ENCODE measurements at regions of chr9 and their contacts with region 1.

Region 1: GRCh38 chr9:134742822-134743535 is 101.4 kb downstream of the COL5A1 start:
- DNase-seq: peak in 1 of 6 donors; percentile 39
- ATAC-seq: no peak
- H3K4me3 ChIP-seq: no peak overlapping the region
- H3K27ac ChIP-seq: no peak overlapping the region
- H3K4me1 ChIP-seq: no peaks in the 10 kb centered on the region
- H3K27me3 ChIP-seq: no peaks in the 10 kb centered on the region
- CTCF ChIP-seq: no peak

Region 2: GRCh38 chr9:134455934-134456739 is 286.8 kb before region 1 on chr9:
- intact Hi-C with region 1: loop called in 1 of 3 experiments (anchors 10 kb)
- DNase-seq: peak in 3 of 6 donors; percentile 44 to 74 (median 50)
- ATAC-seq: peak; percentile 55 to 77 (median 71)
- H3K4me3 ChIP-seq: peak overlapping the region in 1 of 4 donors; percentile 28
- H3K27ac ChIP-seq: peak overlapping the region; percentile 13 to 72 (median 40)
- H3K4me1 ChIP-seq: no peaks in the 10 kb centered on the region
- H3K27me3 ChIP-seq: no peaks in the 10 kb centered on the region
- CTCF ChIP-seq: no peak

Region 3: GRCh38 chr9:134488331-134488881 is 254.6 kb before region 1 on chr9:
- intact Hi-C with region 1: no loop called
- DNase-seq: peak in 2 of 6 donors; percentile 34 to 51
- ATAC-seq: peak in 2 of 4 donors; percentile 22 to 43
- H3K4me3 ChIP-seq: no peak overlapping the region
- H3K27ac ChIP-seq: no peak overlapping the region
- H3K4me1 ChIP-seq: no peaks in the 10 kb centered on the region
- H3K27me3 ChIP-seq: no peaks in the 10 kb centered on the region
- CTCF ChIP-seq: no peak